Activated CD4-positive, alpha-beta memory T cell treated with anti-CD3 and anti-CD28 coated beads, Interleukin-2, amount 10 ng/mL, durations not matched to agents 7 days and 5 days (primary cell): ENCODE measurements at regions of chr3 and their contacts with region 1.

Region 1: GRCh38 chr3:19946832-19947548 is at the start of gene RAB5A:
- DNase-seq: peak; percentile 98
- H3K4me3 Mint-ChIP-seq: peak within 1 kb of the TSS; percentile 89
- H3K27ac Mint-ChIP-seq: peak within 1 kb of the TSS; percentile 99
- H3K4me1 Mint-ChIP-seq: peaks cover 40% of the 10 kb centered on the region
- H3K27me3 Mint-ChIP-seq: no peaks in the 10 kb centered on the region
- total RNA-seq, gene RAB5A: 60.0 to 64.5 TPM

Region 2: GRCh38 chr3:19811689-19812088 is 135.3 kb before region 1 on chr3:
- CTCF ChIA-PET with region 1: no interaction called
- POLR2A ChIA-PET with region 1: no interaction called
- DNase-seq: no peak
- H3K4me3 Mint-ChIP-seq: no peak overlapping the region
- H3K27ac Mint-ChIP-seq: no peak overlapping the region
- H3K4me1 Mint-ChIP-seq: no peaks in the 10 kb centered on the region
- H3K27me3 Mint-ChIP-seq: no peaks in the 10 kb centered on the region

Region 3: DNA sequence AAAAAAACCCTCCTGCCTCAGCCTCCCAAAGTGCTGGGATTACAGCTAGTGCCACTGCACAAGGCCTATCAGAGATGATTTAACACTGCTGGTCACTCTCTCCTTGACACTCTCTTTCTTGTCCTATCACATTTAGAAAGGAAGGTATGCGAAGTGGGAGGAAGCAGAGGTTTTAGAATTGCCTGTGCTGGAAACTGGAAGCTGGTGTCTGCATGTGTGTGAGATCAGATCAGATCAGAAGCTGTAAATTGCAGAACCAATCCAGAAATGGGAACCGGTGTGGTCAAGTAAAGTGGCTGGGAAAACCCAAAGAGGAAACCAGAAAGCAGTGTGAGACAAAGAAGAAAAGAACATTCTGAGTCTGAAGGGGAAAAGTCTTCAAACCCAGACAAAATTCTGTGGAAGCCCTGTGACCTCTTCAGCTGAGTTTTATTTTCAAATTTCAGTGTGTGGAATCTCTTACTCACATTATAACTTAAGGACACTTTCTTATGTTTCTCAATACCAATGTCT is 15.8 kb before region 1 on chr3:
- CTCF ChIA-PET with region 1: no interaction called
- POLR2A ChIA-PET with region 1: interaction called, 11 read pairs
- DNase-seq: peak; percentile 44
- H3K4me3 Mint-ChIP-seq: no peak overlapping the region
- H3K27ac Mint-ChIP-seq: peak overlapping the region; percentile 43
- H3K4me1 Mint-ChIP-seq: peaks cover 31% of the 10 kb centered on the region
- H3K27me3 Mint-ChIP-seq: peaks cover 21% of the 10 kb centered on the region

Region 4: DNA sequence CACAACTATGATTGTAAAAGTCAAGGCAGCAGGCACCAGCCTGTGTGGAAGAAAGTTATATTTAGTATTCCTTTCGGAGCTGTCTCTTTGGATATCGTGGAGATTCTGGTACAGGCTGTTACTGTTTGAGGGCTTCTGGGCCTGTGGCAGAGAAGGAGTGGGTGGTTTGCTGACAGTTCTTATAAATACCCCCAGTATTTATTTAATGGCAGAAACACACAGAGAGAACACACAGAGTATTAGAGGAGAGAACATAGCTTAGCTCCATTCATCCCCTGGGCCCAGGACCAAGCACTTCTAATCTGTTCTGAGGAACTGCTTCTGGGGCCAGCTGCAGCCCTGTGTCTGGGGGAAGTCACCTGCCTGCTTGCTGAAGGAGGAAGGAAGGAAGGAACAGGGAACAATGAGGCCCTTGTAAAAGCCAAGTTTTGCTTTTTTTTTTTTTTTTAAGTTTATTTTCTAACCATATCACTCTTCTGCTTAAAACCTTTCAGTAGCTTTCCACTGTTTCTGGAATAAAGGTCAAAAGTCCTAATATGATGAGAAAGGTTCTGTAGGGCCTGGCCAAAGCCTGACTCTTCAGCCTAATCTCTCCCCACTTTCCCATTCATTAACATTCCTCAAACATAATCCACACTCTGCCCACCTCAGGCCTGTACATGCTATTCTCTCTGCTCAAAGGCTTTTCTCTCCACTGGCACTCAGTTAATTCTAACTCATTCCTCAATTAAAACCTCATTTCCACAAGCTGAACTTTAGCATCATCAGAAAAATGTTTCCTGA is 76.8 kb after region 1 on chr3:
- CTCF ChIA-PET with region 1: no interaction called
- POLR2A ChIA-PET with region 1: no interaction called
- DNase-seq: no peak
- H3K4me3 Mint-ChIP-seq: no peak overlapping the region
- H3K27ac Mint-ChIP-seq: no peak overlapping the region
- H3K4me1 Mint-ChIP-seq: peaks cover 7% of the 10 kb centered on the region
- H3K27me3 Mint-ChIP-seq: no peaks in the 10 kb centered on the region